ENCODE measurements at regions of chr16 and their contacts with region 1.

Region 1: GRCh38 chr16:78684040-78684611 is 584.7 kb downstream of the WWOX start:
- DNase-seq: no peak

Region 2: DNA sequence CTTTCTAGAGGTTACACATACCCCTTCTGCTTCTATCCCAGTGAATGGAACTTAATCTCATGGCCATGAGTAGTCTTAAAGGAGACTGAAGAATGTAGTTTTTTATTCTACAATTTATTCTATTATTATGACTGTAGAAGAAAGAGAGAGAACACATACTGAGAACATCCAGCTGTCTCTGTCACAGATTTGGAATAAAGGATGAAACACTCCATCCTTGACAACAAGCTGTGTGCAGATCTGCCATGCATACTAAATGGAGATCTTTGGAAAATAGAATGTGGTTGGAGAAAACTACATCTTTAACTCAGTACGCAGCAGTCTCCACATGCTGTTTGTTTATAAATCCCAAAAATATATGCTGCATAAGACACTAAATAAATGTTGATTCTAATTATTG is 1015.9 kb before region 1 on chr16:
- intact Hi-C with region 1: no loop called
- DNase-seq: no peak

Region 3: DNA sequence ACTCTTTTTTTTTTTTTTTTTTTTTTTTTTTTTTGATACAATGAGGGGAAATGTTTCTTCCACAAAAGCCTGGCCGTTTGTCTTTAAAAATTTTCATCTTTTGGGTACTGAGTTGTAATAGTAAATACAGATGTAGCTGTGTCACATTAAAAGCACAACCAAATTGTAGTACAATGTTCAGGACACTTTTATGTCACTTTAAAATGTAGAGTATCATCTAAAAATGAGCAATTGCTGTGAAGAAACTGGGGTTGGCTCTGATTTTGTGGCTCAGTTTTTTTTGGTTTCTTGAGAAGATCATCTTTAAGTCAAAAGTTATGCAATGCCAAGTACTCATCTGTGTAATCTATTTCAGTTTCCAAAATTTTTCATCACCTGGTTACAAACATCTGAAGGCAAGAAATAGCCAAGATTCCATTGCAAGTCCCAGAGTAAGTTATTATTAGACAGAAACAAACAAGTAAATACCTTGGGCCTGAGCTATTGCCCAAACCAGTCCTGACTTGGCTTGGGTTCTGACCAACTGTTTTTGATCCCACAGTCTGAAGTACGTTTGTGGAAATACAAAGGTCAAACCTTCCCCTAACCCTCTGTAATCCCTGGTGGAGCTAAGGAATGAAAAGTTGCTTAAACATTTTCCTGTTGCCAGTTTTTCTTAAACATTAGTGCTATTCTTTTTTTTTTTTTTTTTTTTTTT is 132.5 kb after region 1 on chr16:
- intact Hi-C with region 1: loop called (anchors 10 kb)
- DNase-seq: no peak

Measured in cardiac septum (tissue), 1 donor.